ENCODE measurements at regions of chr7 and their contacts with region 1.

Region 1: DNA sequence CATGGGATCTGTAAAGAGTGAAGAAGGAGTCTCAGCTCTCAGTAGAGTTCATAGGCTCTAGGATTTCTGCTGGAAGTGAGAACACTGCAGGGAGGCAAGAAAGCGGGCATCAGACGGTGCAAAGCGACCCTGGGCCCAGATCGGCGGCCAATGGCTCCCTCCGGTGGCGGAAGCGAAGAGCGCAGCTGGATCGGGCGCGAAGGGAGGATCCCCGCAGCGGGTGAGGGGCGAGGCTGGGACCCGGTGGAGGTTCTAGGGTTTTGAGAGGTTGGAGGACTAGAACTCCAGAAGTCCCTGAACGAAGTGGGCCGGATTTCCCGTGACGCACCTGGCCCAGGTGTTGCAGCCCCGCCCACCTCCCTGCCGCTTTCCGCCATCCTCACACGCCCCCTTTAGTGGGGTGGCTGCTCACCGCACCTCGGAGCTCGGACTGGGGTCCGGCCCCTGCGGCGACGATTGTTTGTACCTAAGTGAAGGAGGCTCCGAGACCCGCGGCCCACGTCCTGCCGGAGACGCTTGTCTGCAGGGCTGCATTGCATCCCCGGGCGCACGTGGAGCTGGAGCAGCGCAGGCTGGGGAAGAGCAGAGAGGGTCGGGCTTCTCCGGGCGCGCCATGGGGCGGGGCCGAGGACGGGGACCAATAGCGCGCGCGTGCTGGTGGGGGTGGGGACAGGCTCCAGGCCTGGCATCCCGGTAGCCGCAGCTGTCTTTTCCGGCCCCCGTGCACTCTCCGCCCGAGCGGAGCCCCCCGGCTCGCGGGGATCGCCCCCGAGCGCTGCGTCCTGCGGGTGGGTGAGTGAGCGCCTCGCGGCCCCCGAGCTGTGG is at the start of gene SLC12A9:
- DNase-seq: peak; percentile 89
- H3K4me3 Mint-ChIP-seq: peak within 1 kb of the TSS; percentile 97
- H3K27ac Mint-ChIP-seq: peak within 1 kb of the TSS; percentile 80
- H3K4me1 Mint-ChIP-seq: peaks cover 22% of the 10 kb centered on the region
- H3K27me3 Mint-ChIP-seq: no peaks in the 10 kb centered on the region
- total RNA-seq, gene SLC12A9: 44.1 to 49.1 TPM

Region 2: DNA sequence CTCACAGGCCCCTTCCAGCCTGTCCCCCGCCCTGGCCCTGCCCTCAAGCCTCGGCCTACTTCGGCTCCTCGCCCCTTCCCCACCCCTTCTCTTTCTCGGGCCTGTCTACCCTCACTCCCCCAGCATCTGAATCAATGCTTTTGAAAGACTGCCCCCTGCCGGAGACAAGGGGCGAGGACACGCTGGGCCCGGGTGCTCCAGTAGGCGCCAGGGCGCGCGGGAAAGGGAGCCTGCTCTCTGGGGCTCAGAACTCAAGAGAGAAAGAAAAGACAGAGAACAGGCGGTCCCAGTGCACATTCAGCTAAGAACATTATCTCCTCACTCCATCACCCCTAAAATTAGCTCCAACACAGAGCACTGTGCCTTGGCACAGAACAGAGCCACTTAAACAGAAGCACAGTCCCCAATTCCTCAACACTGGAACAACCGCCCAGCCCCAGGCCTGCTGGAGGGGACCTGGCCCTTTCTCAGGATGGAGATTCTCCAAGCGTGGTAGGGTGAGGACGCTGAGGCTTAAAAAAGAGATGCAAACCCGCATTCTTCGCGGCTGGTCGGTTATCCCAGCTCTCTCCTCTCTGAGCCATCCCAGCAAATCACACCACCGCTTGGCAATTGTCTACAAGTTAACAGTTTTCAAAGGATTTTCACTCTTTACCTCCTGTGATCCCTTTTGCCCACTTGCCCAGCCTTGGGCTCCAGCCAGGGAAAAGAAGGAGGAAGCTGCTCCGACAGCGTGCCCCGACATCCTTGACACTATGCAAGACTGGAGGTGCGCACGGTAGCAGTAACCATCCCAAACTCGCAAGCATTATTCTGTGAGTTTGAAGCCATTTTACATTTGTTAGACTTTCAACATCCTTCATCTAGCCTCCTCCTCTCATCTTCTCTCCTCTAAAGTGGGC is 160.3 kb before region 1 on chr7:
- CTCF ChIA-PET with region 1: interaction called, 14 read pairs
- POLR2A ChIA-PET with region 1: no interaction called
- DNase-seq: peak; percentile 89
- H3K4me3 Mint-ChIP-seq: peak overlapping the region; percentile 96
- H3K27ac Mint-ChIP-seq: peak overlapping the region; percentile 22
- H3K4me1 Mint-ChIP-seq: peaks cover 40% of the 10 kb centered on the region
- H3K27me3 Mint-ChIP-seq: peaks cover 9% of the 10 kb centered on the region

Region 3: GRCh38 chr7:100773491-100773890 is 78.8 kb before region 1 on chr7:
- CTCF ChIA-PET with region 1: no interaction called
- POLR2A ChIA-PET with region 1: no interaction called
- DNase-seq: no peak
- H3K4me3 Mint-ChIP-seq: no peak overlapping the region
- H3K27ac Mint-ChIP-seq: no peak overlapping the region
- H3K4me1 Mint-ChIP-seq: no peaks in the 10 kb centered on the region
- H3K27me3 Mint-ChIP-seq: no peaks in the 10 kb centered on the region

Region 4: DNA sequence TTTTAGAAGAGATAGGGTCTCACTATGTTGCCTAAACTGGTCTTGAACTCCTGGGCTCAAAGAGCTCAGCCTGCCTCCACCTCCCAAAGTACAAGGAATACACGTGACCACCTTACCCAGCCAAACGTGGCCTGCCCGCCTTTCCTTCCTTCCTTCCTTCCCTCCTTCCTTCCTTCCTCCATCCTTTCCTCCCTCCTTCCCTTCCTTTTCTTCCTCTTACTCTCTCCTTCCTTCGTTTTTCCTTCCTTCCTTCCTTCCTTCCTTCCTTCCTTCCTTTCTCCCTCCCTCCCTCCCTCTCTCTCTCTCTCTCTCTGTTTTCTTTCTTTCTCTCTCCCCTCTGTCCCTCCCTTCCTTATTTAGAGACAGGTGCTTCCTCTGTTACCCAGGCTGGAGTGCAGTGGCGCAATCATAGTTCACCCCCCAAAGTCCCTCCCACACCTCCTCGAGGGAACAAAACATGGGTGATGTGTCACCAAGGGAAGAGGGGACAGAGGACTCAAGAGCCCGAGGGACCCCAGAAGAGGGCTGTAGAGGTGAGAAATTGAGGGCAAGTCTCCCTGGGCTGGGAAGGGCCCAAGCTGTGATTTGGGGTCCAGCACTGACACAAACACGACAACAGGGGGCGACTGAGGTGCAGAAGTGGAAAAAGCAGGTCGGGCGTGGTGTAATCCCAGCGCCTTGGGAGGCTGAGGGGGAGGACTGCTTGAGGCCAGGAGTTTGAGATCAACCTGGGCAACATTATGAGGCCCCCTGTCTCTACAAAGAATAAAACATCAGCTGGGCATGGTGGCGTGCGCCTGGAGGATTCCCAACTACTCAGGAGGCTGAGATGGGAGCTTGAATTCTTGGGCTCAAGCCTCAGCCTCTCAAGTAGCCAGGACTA is 53.0 kb before region 1 on chr7:
- CTCF ChIA-PET with region 1: interaction called, 35 read pairs
- POLR2A ChIA-PET with region 1: no interaction called
- DNase-seq: peak; percentile 66
- H3K4me3 Mint-ChIP-seq: no peak overlapping the region
- H3K27ac Mint-ChIP-seq: no peak overlapping the region
- H3K4me1 Mint-ChIP-seq: peaks cover 9% of the 10 kb centered on the region
- H3K27me3 Mint-ChIP-seq: no peaks in the 10 kb centered on the region

Region 5: GRCh38 chr7:100829150-100829716 is 23.0 kb before region 1 on chr7:
- CTCF ChIA-PET with region 1: interaction called, 24 read pairs
- POLR2A ChIA-PET with region 1: no interaction called
- DNase-seq: no peak
- H3K4me3 Mint-ChIP-seq: no peak overlapping the region
- H3K27ac Mint-ChIP-seq: no peak overlapping the region
- H3K4me1 Mint-ChIP-seq: peaks cover 21% of the 10 kb centered on the region
- H3K27me3 Mint-ChIP-seq: peaks cover 42% of the 10 kb centered on the region

Region 6: GRCh38 chr7:100837099-100837836 is 15.0 kb before region 1 on chr7:
- CTCF ChIA-PET with region 1: interaction called, 24 read pairs
- POLR2A ChIA-PET with region 1: no interaction called
- DNase-seq: peak; percentile 73
- H3K4me3 Mint-ChIP-seq: peak overlapping the region; percentile 72
- H3K27ac Mint-ChIP-seq: peak overlapping the region; percentile 81
- H3K4me1 Mint-ChIP-seq: peaks cover 25% of the 10 kb centered on the region
- H3K27me3 Mint-ChIP-seq: peaks cover 2% of the 10 kb centered on the region